ENCODE measurements at regions of chr3 and their contacts with region 1.

Region 1: GRCh38 chr3:115092220-115092791 is 54.8 kb downstream of the ZBTB20 start:
- DNase-seq: no peak

Region 2: GRCh38 chr3:114803042-114803695 is 289.1 kb before region 1 on chr3:
- intact Hi-C with region 1: no loop called
- DNase-seq: no peak

Region 3: GRCh38 chr3:114827495-114827894 is 264.8 kb before region 1 on chr3:
- intact Hi-C with region 1: loop called (anchors 5 kb)
- DNase-seq: no peak

Region 4: GRCh38 chr3:114939920-114940319 is 152.4 kb before region 1 on chr3:
- intact Hi-C with region 1: no loop called
- DNase-seq: no peak

Region 5: GRCh38 chr3:115040673-115041286 is 51.5 kb before region 1 on chr3:
- intact Hi-C with region 1: loop called (anchors 5 kb)
- DNase-seq: no peak

Region 6: GRCh38 chr3:115169808-115170207 is 77.5 kb after region 1 on chr3:
- intact Hi-C with region 1: loop called (anchors 2 kb)
- DNase-seq: no peak

Measured in cardiac septum (tissue), 1 donor.